Mammary epithelial cell (primary cell): ENCODE measurements at regions of chr15 and their contacts with region 1.

Region 1: DNA sequence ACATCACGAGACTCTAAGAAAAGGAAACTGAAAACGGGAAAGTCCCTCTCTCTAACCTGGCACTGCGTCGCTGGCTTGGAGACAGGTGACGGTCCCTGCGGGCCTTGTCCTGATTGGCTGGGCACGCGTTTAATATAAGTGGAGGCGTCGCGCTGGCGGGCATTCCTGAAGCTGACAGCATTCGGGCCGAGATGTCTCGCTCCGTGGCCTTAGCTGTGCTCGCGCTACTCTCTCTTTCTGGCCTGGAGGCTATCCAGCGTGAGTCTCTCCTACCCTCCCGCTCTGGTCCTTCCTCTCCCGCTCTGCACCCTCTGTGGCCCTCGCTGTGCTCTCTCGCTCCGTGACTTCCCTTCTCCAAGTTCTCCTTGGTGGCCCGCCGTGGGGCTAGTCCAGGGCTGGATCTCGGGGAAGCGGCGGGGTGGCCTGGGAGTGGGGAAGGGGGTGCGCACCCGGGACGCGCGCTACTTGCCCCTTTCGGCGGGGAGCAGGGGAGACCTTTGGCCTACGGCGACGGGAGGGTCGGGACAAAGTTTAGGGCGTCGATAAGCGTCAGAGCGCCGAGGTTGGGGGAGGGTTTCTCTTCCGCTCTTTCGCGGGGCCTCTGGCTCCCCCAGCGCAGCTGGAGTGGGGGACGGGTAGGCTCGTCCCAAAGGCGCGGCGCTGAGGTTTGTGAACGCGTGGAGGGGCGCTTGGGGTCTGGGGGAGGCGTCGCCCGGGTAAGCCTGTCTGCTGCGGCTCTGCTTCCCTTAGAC is at the start of gene B2M:
- DNase-seq: peak; percentile 94
- H3K4me3 ChIP-seq: peak within 1 kb of the TSS; percentile 74 to 98 (median 78)
- H3K27ac ChIP-seq: peak within 1 kb of the TSS; percentile 80
- H3K4me1 ChIP-seq: peaks cover 19% of the 10 kb centered on the region
- H3K27me3 ChIP-seq: no peaks in the 10 kb centered on the region
- CTCF ChIP-seq: no peak
- total RNA-seq, gene B2M: 416 to 518 TPM

Region 2: GRCh38 chr15:44286814-44287452 is 424.6 kb before region 1 on chr15:
- CTCF ChIA-PET with region 1: interaction called, 19 read pairs
- dilution Hi-C with region 1: no loop called
- in situ Hi-C with region 1: no loop called
- intact Hi-C with region 1: no loop called
- DNase-seq: peak; percentile 9
- H3K4me3 ChIP-seq: peak overlapping the region in 2 of 3 experiments; percentile 81 to 90
- H3K27ac ChIP-seq: peak overlapping the region; percentile 97
- H3K4me1 ChIP-seq: peaks cover 4% of the 10 kb centered on the region
- H3K27me3 ChIP-seq: no peaks in the 10 kb centered on the region
- CTCF ChIP-seq: peak; percentile 4 to 17

Region 3: GRCh38 chr15:44663409-44664308 is 47.9 kb before region 1 on chr15 and contains the start of gene SPG11:
- CTCF ChIA-PET with region 1: interaction called, 3 read pairs
- dilution Hi-C with region 1: no loop called
- in situ Hi-C with region 1: no loop called
- intact Hi-C with region 1: loop called (anchors 1 kb)
- DNase-seq: peak; percentile 94
- H3K4me3 ChIP-seq: peak within 1 kb of the TSS; percentile 67 to 89 (median 82)
- H3K27ac ChIP-seq: peak within 1 kb of the TSS; percentile 58
- H3K4me1 ChIP-seq: peaks cover 15% of the 10 kb centered on the region
- H3K27me3 ChIP-seq: no peaks in the 10 kb centered on the region
- CTCF ChIP-seq: peak; percentile 80 to 82
- total RNA-seq, gene SPG11: 55.4 to 76.2 TPM

Region 4: DNA sequence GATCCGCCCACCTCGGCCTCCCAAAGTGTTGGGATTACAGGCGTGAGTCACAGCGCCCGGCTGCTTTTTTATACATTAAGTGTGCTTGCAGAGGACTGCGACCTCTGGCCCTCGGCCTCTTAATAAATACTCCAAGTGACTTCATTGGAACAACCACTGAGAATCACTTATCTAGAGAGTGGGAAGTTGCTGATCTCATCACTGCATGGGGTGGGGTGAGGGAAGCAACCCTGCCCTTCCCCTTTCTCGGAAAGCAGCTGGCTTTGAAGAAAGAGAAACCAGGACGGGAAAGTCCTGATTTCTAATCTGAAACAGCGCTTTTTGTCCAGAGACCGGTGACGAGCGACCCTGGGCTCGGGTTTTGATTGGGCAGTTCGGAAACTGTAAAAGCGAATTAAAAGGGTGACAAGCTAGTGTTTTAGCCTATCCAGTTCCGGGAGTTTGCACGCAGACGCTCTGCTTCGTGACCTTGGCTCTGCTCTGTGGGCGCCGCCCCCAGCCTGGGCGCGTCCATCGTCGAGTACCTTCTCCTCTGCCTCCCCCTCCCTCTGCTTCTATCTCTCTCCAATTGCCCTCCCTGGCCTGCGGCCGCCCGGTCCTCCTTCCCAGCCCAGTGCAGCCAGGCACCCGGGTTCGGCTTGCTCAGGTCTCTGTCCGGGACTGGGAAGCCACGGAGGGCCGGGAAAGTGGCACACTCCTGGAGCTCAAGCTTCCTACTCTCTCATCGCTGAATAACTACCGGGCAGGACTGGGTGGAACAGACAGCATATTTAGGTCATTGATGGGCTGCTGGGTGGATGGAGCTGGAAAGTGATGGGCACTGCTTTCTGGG is 17.3 kb after region 1 on chr15:
- CTCF ChIA-PET with region 1: interaction called, 4 read pairs
- dilution Hi-C with region 1: no loop called
- in situ Hi-C with region 1: no loop called
- intact Hi-C with region 1: loop called (anchors 1 kb)
- DNase-seq: peak; percentile 99
- H3K4me3 ChIP-seq: peak overlapping the region; percentile 70 to 83 (median 76)
- H3K27ac ChIP-seq: peak overlapping the region; percentile 91
- H3K4me1 ChIP-seq: peaks cover 20% of the 10 kb centered on the region
- H3K27me3 ChIP-seq: no peaks in the 10 kb centered on the region
- CTCF ChIP-seq: no peak

Region 5: GRCh38 chr15:44738340-44738984 is 26.9 kb after region 1 on chr15:
- CTCF ChIA-PET with region 1: interaction called, 10 read pairs
- dilution Hi-C with region 1: no loop called
- in situ Hi-C with region 1: no loop called
- intact Hi-C with region 1: loop called (anchors 1 kb)
- DNase-seq: peak; percentile 35
- H3K4me3 ChIP-seq: no peak overlapping the region
- H3K27ac ChIP-seq: no peak overlapping the region
- H3K4me1 ChIP-seq: no peaks in the 10 kb centered on the region
- H3K27me3 ChIP-seq: no peaks in the 10 kb centered on the region
- CTCF ChIP-seq: peak; percentile 68 to 75